MCF 10A (cell line): ENCODE measurements at regions of chr2 and their contacts with region 1.

Region 1: GRCh38 chr2:133844214-133844892 is 276.1 kb upstream of the NCKAP5 start:
- DNase-seq: peak; percentile 84
- H3K4me3 Mint-ChIP-seq: no peak overlapping the region
- H3K27ac Mint-ChIP-seq: no peak overlapping the region
- H3K4me1 Mint-ChIP-seq: peaks cover 15% of the 10 kb centered on the region
- H3K27me3 Mint-ChIP-seq: no peaks in the 10 kb centered on the region
- CTCF ChIP-seq: peak; percentile 90

Region 2: DNA sequence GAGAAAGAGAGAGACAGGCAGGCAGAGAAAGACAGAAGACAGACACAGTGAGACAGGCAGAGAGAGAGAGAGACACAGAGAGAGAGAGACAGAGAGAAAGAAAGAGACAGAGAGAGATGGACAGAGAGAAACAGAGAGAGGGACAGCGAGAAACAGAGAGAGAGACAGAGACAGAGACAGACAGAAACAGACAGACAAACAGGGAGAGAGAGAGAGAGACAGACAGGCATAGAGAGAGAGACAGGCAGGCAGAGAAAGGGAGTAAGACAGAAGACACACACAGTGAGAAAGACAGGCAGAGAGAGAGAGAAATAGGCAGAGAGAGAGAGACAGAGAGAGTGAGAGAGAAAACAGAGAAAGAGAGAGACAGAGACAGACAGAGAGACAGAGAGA is 1577.3 kb before region 1 on chr2:
- CTCF ChIA-PET with region 1: interaction called, 3 read pairs
- POLR2A ChIA-PET with region 1: no interaction called
- intact Hi-C with region 1: loop called (anchors 5 kb)
- DNase-seq: no peak
- H3K4me3 Mint-ChIP-seq: no peak overlapping the region
- H3K27ac Mint-ChIP-seq: no peak overlapping the region
- H3K4me1 Mint-ChIP-seq: no peaks in the 10 kb centered on the region
- H3K27me3 Mint-ChIP-seq: no peaks in the 10 kb centered on the region
- CTCF ChIP-seq: no peak

Region 3: DNA sequence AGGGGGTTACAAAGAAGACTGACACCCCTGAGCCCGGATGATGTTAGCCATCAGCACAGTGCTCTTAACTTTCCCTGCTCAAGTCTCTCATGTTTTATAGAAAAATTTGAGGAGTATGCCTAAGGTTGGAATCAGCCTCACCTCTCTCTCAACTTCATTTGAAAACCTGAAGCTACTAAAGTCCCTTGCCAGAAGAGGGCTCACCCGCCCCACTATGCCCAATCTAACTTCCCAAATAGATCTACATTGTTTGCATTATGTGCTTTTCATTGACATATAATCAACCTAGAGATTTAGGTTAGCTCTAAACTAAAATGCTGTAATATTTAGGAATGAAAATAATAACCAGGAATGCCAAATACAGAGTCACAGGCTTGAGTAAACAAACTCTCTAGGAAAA is 581.5 kb before region 1 on chr2:
- CTCF ChIA-PET with region 1: interaction called, 6 read pairs
- POLR2A ChIA-PET with region 1: no interaction called
- intact Hi-C with region 1: loop called (anchors 2 kb)
- DNase-seq: no peak
- H3K4me3 Mint-ChIP-seq: no peak overlapping the region
- H3K27ac Mint-ChIP-seq: no peak overlapping the region
- H3K4me1 Mint-ChIP-seq: no peaks in the 10 kb centered on the region
- H3K27me3 Mint-ChIP-seq: peaks cover 11% of the 10 kb centered on the region
- CTCF ChIP-seq: peak; percentile 35

Region 4: GRCh38 chr2:133780099-133780839 is 64.1 kb before region 1 on chr2:
- CTCF ChIA-PET with region 1: interaction called, 13 read pairs
- POLR2A ChIA-PET with region 1: no interaction called
- intact Hi-C with region 1: loop called (anchors 2 kb)
- DNase-seq: peak; percentile 74
- H3K4me3 Mint-ChIP-seq: no peak overlapping the region
- H3K27ac Mint-ChIP-seq: no peak overlapping the region
- H3K4me1 Mint-ChIP-seq: no peaks in the 10 kb centered on the region
- H3K27me3 Mint-ChIP-seq: no peaks in the 10 kb centered on the region
- CTCF ChIP-seq: peak; percentile 75

Region 5: GRCh38 chr2:133855526-133855925 is 11.2 kb after region 1 on chr2:
- CTCF ChIA-PET with region 1: interaction called, 21 read pairs
- POLR2A ChIA-PET with region 1: no interaction called
- intact Hi-C with region 1: no loop called
- DNase-seq: no peak
- H3K4me3 Mint-ChIP-seq: no peak overlapping the region
- H3K27ac Mint-ChIP-seq: no peak overlapping the region
- H3K4me1 Mint-ChIP-seq: no peaks in the 10 kb centered on the region
- H3K27me3 Mint-ChIP-seq: no peaks in the 10 kb centered on the region
- CTCF ChIP-seq: no peak